ENCODE measurements at regions of chr3 and their contacts with region 1.

Region 1: DNA sequence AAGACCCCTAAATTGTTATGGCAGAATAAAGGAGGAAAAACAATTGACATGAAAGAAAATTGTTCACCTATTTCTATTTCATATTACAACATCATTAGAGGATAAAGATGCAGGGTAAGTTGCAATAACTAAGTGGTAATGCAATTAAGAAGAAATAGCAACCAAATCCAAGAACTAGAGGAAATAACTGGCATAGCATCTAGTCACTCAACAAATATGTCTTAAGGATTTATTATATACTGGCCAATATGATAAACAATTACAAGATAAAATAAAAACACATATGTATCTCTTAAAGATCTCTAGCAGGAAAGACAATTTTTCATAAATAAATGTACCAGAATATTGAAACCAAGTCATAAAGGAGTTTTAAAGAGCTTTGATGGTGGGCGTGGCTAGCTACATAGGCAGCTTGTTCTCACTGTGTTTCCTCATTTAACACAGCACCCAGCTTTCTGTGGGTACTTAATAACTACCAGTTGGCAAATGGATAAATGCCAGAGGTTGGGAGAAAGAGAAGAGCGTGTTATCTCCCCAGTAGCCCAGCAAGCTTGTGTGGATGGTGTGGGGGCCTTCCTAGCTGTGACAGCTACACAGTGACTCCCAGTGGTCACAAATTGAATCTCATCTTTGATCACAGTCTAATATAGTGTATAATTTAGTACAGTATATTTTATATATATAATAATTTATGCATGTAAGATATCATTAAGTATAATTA is 983.9 kb downstream of the EPHA3 start:
- DNase-seq: peak; percentile 30 to 34
- H3K4me3 ChIP-seq: no peak overlapping the region
- H3K4me3 Mint-ChIP-seq: no peak overlapping the region
- H3K27ac Mint-ChIP-seq: no peak overlapping the region
- H3K4me1 ChIP-seq: no peaks in the 10 kb centered on the region
- H3K4me1 Mint-ChIP-seq: no peaks in the 10 kb centered on the region
- H3K27me3 ChIP-seq: no peaks in the 10 kb centered on the region
- H3K27me3 Mint-ChIP-seq: no peaks in the 10 kb centered on the region
- CTCF ChIP-seq: peak; percentile 51 to 53

Region 2: GRCh38 chr3:89714237-89714636 is 377.1 kb before region 1 on chr3:
- CTCF ChIA-PET with region 1: no interaction called
- POLR2A ChIA-PET with region 1: no interaction called
- intact Hi-C with region 1: no loop called
- DNase-seq: no peak
- H3K4me3 ChIP-seq: no peak overlapping the region
- H3K4me3 Mint-ChIP-seq: no peak overlapping the region
- H3K27ac Mint-ChIP-seq: no peak overlapping the region
- H3K4me1 ChIP-seq: no peaks in the 10 kb centered on the region
- H3K4me1 Mint-ChIP-seq: no peaks in the 10 kb centered on the region
- H3K27me3 ChIP-seq: no peaks in the 10 kb centered on the region
- H3K27me3 Mint-ChIP-seq: no peaks in the 10 kb centered on the region
- CTCF ChIP-seq: no peak

Region 3: DNA sequence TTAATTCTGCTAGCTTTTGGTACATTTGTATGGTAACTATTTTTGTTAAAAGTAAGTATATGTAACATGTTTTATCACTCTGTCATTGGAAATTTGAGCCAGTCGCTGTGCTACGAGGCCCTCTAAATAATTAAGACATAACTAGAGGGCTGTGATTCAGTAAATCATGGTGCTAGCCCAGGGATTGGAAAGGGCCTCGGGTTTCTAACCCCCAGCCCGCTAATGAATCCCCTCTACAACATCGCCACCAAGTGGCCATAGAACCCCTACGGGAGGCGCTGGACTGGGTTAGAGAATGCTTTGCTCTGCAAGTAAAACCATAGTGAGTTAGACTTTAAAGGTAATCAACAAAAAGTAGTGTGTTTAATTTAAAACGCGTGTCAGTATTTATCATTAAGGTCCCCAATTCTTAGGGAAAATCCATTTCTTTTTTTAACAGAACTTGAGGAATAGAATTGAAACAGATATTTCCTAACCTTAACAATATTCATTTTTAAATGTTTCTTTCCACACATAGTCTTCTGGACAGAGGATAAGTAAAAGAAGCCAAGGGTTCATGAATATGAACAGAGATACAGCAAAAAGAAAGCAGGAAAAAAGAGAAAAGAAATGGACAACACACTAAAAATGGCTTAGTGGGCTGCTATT is 239.3 kb before region 1 on chr3:
- CTCF ChIA-PET with region 1: no interaction called
- POLR2A ChIA-PET with region 1: no interaction called
- intact Hi-C with region 1: loop called (anchors 5 kb)
- DNase-seq: peak; percentile 52 to 69
- H3K4me3 ChIP-seq: no peak overlapping the region
- H3K4me3 Mint-ChIP-seq: no peak overlapping the region
- H3K27ac Mint-ChIP-seq: no peak overlapping the region
- H3K4me1 ChIP-seq: no peaks in the 10 kb centered on the region
- H3K4me1 Mint-ChIP-seq: no peaks in the 10 kb centered on the region
- H3K27me3 ChIP-seq: no peaks in the 10 kb centered on the region
- H3K27me3 Mint-ChIP-seq: no peaks in the 10 kb centered on the region
- CTCF ChIP-seq: peak; percentile 59 to 78

Region 4: GRCh38 chr3:89912031-89912430 is 179.3 kb before region 1 on chr3:
- CTCF ChIA-PET with region 1: no interaction called
- POLR2A ChIA-PET with region 1: no interaction called
- intact Hi-C with region 1: loop called (anchors 10 kb)
- DNase-seq: no peak
- H3K4me3 ChIP-seq: no peak overlapping the region
- H3K4me3 Mint-ChIP-seq: no peak overlapping the region
- H3K27ac Mint-ChIP-seq: no peak overlapping the region
- H3K4me1 ChIP-seq: no peaks in the 10 kb centered on the region
- H3K4me1 Mint-ChIP-seq: no peaks in the 10 kb centered on the region
- H3K27me3 ChIP-seq: no peaks in the 10 kb centered on the region
- H3K27me3 Mint-ChIP-seq: no peaks in the 10 kb centered on the region
- CTCF ChIP-seq: no peak

Region 5: DNA sequence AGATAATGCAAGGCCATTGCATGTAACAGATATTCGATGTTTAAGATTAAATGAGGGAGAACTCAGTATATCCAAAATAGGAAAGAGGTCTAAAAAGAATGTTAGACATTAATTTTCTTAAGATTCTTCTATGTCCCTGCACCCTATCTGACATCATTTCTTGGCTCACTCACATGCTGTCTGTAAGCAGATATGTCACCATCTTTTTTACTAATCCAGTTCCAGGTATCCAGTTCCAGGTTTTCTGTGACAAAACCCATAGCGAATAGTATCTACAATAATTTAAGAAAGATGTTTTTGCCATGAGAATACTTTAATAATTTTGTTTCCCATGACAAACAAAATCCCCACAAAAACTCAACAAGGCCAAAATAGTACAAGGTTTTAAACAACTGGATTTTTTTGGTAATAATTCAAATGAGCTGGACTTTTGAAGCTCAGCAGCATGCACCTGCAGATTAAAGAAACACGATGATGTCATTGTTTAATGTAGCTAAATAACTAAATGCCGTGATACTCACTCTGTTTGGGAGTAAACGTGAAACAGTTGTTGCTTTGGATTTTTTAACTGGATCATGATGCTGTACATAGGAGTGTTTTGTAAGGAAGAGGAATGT is 116.4 kb before region 1 on chr3:
- CTCF ChIA-PET with region 1: no interaction called
- POLR2A ChIA-PET with region 1: no interaction called
- intact Hi-C with region 1: loop called (anchors 10 kb)
- DNase-seq: no peak
- H3K4me3 ChIP-seq: no peak overlapping the region
- H3K4me3 Mint-ChIP-seq: no peak overlapping the region
- H3K27ac Mint-ChIP-seq: no peak overlapping the region
- H3K4me1 ChIP-seq: no peaks in the 10 kb centered on the region
- H3K4me1 Mint-ChIP-seq: no peaks in the 10 kb centered on the region
- H3K27me3 ChIP-seq: no peaks in the 10 kb centered on the region
- H3K27me3 Mint-ChIP-seq: no peaks in the 10 kb centered on the region
- CTCF ChIP-seq: no peak

Region 6: DNA sequence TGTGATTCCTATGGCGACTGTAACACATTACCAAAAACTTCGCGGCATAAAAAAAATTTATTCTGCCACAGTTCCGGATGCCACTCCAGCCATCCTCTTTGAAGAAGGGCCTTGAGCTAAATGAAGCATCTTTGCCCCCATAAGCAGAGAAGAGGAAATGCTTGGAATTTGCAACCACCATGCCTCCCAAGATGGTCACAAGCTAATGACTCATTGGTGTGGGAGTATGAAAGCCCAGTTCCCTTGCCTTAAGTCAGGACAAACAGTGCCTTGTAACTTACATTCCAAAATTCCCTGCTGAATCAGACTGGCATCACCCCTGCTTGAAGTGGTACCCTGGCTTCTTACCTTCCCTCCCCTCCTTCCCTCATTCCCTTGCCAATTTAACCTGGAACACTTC is 93.5 kb after region 1 on chr3:
- CTCF ChIA-PET with region 1: no interaction called
- POLR2A ChIA-PET with region 1: no interaction called
- intact Hi-C with region 1: loop called (anchors 10 kb)
- DNase-seq: no peak
- H3K4me3 ChIP-seq: no peak overlapping the region
- H3K4me3 Mint-ChIP-seq: no peak overlapping the region
- H3K27ac Mint-ChIP-seq: no peak overlapping the region
- H3K4me1 ChIP-seq: no peaks in the 10 kb centered on the region
- H3K4me1 Mint-ChIP-seq: no peaks in the 10 kb centered on the region
- H3K27me3 ChIP-seq: no peaks in the 10 kb centered on the region
- H3K27me3 Mint-ChIP-seq: no peaks in the 10 kb centered on the region
- CTCF ChIP-seq: no peak